PC-3 (cell line): ENCODE measurements at regions of chr12 and their contacts with region 1.

Region 1: GRCh38 chr12:112012775-112013600 is at the starts of genes ERP29 and TMEM116:
- DNase-seq: peak; percentile 99
- ATAC-seq: peak; percentile 79
- H3K4me3 ChIP-seq: peak within 1 kb of the TSS; percentile 92
- H3K27ac ChIP-seq: peak within 1 kb of the TSS; percentile 86
- H3K4me1 ChIP-seq: peaks cover 36% of the 10 kb centered on the region
- H3K27me3 ChIP-seq: no peaks in the 10 kb centered on the region
- CTCF ChIP-seq: peak; percentile 48
- total RNA-seq, gene ERP29: 90.2 and 97.2 TPM in 2 replicates
- total RNA-seq, gene TMEM116: 4.4 and 5.6 TPM in 2 replicates

Region 2: GRCh38 chr12:111841750-111842555 is 171.0 kb before region 1 on chr12 and contains the start of gene MAPKAPK5:
- CTCF ChIA-PET with region 1: no interaction called
- POLR2A ChIA-PET with region 1: no interaction called
- intact Hi-C with region 1: loop called (anchors 5 kb)
- DNase-seq: peak; percentile 99
- ATAC-seq: peak; percentile 78
- H3K4me3 ChIP-seq: peak within 1 kb of the TSS; percentile 74
- H3K27ac ChIP-seq: peak within 1 kb of the TSS; percentile 67
- H3K4me1 ChIP-seq: peaks cover 24% of the 10 kb centered on the region
- H3K27me3 ChIP-seq: no peaks in the 10 kb centered on the region
- CTCF ChIP-seq: no peak
- total RNA-seq, gene MAPKAPK5: 65.0 and 78.2 TPM in 2 replicates

Region 3: GRCh38 chr12:112087055-112087850 is 74.3 kb after region 1 on chr12:
- CTCF ChIA-PET with region 1: no interaction called
- POLR2A ChIA-PET with region 1: no interaction called
- intact Hi-C with region 1: loop called (anchors 2 kb)
- DNase-seq: no peak
- ATAC-seq: peak; percentile 27
- H3K4me3 ChIP-seq: no peak overlapping the region
- H3K27ac ChIP-seq: no peak overlapping the region
- H3K4me1 ChIP-seq: peaks cover 6% of the 10 kb centered on the region
- H3K27me3 ChIP-seq: no peaks in the 10 kb centered on the region
- CTCF ChIP-seq: peak; percentile 57